ENCODE measurements at regions of chr3 and their contacts with region 1.

Region 1: DNA sequence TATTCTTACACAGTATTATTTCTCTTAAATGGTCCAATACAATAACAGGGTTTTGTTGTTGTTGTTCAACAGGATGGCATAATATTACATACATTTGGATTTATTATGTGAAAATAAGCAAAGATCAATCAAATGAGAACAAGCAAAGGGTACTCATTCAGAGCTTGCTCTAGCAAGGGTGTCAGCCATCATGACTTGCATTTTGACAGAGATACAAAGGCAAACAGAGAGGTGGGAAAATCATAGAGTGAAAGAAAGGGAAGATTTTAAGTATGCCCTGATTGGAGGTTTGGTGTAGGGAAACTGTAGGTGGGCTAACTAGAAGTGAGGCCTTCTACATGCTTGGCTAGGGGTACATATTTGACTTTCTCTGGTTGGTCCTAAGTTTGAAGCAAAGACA is 109.1 kb upstream of the BCHE start:
- DNase-seq: no peak
- ATAC-seq: no peak
- H3K4me3 ChIP-seq: no peak overlapping the region
- H3K27ac ChIP-seq: no peak overlapping the region
- H3K4me1 ChIP-seq: no peaks in the 10 kb centered on the region
- H3K27me3 ChIP-seq: no peaks in the 10 kb centered on the region
- CTCF ChIP-seq: no peak

Region 2: DNA sequence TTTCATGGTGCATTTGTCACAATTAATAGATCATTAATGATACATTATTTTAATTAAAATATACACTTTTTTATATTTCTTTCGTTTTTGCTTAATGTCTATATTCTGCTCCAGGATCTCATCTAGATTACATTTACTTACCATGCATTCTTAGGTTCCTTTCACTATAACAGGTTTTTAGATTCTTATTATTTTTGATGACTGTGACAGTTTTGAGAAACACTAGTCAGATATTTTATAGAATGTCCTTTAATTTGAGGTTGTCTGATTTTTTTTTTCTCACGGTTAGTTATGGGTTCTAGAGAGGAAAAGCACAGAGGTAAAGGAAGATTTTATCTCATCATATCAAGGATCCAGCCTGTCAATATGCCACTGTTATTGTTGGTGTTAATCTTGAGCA is 486.7 kb after region 1 on chr3:
- intact Hi-C with region 1: no loop called
- DNase-seq: no peak
- ATAC-seq: no peak
- H3K4me3 ChIP-seq: no peak overlapping the region
- H3K27ac ChIP-seq: no peak overlapping the region
- H3K4me1 ChIP-seq: no peaks in the 10 kb centered on the region
- H3K27me3 ChIP-seq: no peaks in the 10 kb centered on the region
- CTCF ChIP-seq: no peak

Region 3: GRCh38 chr3:167669699-167670098 is 1723.3 kb after region 1 on chr3:
- intact Hi-C with region 1: loop called in 1 of 10 experiments (anchors 5 kb)
- DNase-seq: no peak
- ATAC-seq: no peak
- H3K4me3 ChIP-seq: no peak overlapping the region
- H3K27ac ChIP-seq: no peak overlapping the region
- H3K4me1 ChIP-seq: no peaks in the 10 kb centered on the region
- H3K27me3 ChIP-seq: no peaks in the 10 kb centered on the region
- CTCF ChIP-seq: no peak

Measured in heart right ventricle (tissue), 16 donors.